ENCODE measurements at regions of chr6 and their contacts with region 1.

Region 1: DNA sequence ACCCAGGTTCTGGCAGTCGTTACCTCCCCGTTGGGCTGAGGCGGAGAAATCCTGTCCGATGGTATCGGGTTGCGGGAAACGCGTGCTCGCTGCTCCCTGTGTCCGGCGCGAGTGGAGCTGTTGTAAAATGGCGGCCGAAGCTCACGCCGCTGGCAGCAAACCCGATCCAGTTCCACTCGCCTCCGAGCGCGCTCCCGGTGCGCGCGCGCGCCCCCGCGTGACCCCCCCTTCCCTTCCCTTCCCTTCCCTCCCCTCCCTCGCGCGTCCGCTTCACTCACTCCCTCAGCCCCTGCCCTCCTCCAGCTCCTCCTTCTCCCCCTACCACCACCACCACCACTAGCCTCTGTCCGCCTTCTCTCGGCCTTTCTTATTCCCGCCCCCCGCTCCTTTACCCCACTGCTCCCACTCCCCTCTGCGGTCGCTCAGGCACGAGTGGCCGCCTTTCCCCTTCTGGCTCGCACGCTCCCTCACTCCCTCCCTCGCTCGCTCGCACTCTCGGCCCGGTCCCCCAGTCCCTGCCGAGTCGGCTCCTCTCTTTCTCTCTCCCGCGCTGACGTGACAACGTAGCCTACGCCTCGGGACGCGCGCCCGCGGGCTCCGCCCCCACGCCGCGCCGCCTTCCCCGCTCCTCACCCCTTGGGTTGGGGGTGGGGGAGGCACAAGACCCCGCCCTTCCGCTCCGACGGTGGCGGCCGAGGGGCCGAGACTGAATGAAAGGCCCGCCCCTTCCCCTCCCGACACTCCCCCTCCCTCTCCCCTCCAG is at the start of gene SYNCRIP:
- DNase-seq: peak; percentile 99
- H3K4me3 ChIP-seq: peak within 1 kb of the TSS; percentile 92 to 99 (median 99)
- H3K27ac ChIP-seq: peak within 1 kb of the TSS; percentile 99
- H3K4me1 ChIP-seq: peaks cover 23% of the 10 kb centered on the region
- H3K27me3 ChIP-seq: no peaks in the 10 kb centered on the region
- CTCF ChIP-seq: no peak
- total RNA-seq, gene SYNCRIP: 47.8 to 132 TPM

Region 2: DNA sequence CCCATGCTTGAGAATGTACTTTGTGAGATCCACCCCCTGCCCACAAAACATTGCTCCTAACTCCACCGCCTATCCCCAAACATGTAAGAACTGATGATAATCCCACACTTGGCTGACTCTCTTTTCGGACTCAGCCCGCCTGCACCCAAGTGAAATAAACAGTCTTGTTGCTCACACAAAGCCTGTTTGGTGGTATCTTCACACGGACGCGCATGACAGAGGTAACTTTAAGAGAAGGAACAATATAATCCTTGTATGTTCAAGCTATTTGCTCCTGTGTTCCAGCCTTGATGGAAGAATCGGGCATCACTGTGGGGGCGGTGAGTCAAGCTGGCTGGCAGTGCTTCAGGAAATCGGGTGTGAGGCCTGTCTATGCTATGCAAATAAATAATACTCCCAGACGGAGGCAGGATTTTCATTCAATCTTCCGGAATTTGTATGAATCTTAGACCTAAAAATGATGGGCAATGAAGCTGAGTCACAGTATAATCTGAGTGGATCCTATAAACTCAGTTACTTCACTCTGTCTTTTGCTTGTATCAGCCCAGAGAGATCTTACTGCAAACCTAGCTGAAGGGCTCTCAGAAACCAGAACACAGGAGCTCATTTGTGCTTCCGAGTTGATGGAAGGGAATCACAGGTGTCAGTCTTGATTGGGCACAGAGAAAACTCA is 238.3 kb before region 1 on chr6:
- CTCF ChIA-PET with region 1: no interaction called
- dilution Hi-C with region 1: loop called (anchors 10 kb)
- in situ Hi-C with region 1: no loop called
- intact Hi-C with region 1: no loop called
- DNase-seq: peak; percentile 94
- H3K4me3 ChIP-seq: peak overlapping the region in 1 of 3 experiments; percentile 32
- H3K27ac ChIP-seq: peak overlapping the region; percentile 96
- H3K4me1 ChIP-seq: peaks cover 59% of the 10 kb centered on the region
- H3K27me3 ChIP-seq: no peaks in the 10 kb centered on the region
- CTCF ChIP-seq: no peak

Region 3: DNA sequence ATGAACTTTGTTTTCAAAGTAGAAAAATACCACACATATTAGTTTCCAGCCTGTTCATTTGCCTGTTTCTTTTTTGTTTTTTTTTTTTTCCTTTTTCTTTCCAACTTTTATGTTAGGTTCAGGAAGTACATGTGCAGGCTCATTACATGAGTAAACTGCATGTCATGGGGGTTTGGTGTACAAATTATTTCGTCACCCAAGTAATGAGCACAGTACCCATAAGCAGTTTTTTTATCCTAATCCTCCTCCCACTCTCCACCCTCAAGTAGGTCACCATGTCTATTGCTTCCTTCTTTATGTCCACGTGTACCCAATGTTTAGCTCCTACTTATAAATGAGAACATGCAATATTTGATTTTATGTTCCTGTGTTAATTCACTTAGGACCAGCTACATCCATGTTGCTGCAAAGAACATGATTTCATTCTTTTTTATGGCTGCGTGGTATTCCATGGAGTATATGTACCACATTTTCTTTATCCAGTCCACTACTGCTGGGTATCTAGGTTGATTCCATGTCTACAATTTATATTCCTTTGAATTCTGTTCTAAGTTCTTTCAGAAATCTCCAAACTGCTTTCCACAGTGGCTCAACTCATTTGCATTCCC is 81.1 kb before region 1 on chr6:
- CTCF ChIA-PET with region 1: no interaction called
- dilution Hi-C with region 1: no loop called
- in situ Hi-C with region 1: no loop called
- intact Hi-C with region 1: no loop called
- DNase-seq: peak; percentile 54
- H3K4me3 ChIP-seq: no peak overlapping the region
- H3K27ac ChIP-seq: peak overlapping the region; percentile 12
- H3K4me1 ChIP-seq: peaks cover 4% of the 10 kb centered on the region
- H3K27me3 ChIP-seq: no peaks in the 10 kb centered on the region
- CTCF ChIP-seq: no peak

Region 4: GRCh38 chr6:85593438-85594196 is 49.3 kb before region 1 on chr6 and contains the start of gene SNX14:
- CTCF ChIA-PET with region 1: no interaction called
- dilution Hi-C with region 1: no loop called
- in situ Hi-C with region 1: no loop called
- intact Hi-C with region 1: loop called (anchors 2 kb)
- DNase-seq: peak; percentile 93
- H3K4me3 ChIP-seq: peak within 1 kb of the TSS; percentile 87 to 94 (median 88)
- H3K27ac ChIP-seq: peak within 1 kb of the TSS; percentile 79
- H3K4me1 ChIP-seq: peaks cover 4% of the 10 kb centered on the region
- H3K27me3 ChIP-seq: no peaks in the 10 kb centered on the region
- CTCF ChIP-seq: peak in 1 of 2 donors; percentile 1
- total RNA-seq, gene SNX14: 76.8 to 87.6 TPM

Region 5: GRCh38 chr6:85620308-85620707 is 22.6 kb before region 1 on chr6:
- CTCF ChIA-PET with region 1: interaction called, 29 read pairs
- dilution Hi-C with region 1: no loop called
- in situ Hi-C with region 1: no loop called
- intact Hi-C with region 1: no loop called
- DNase-seq: no peak
- H3K4me3 ChIP-seq: no peak overlapping the region
- H3K27ac ChIP-seq: no peak overlapping the region
- H3K4me1 ChIP-seq: no peaks in the 10 kb centered on the region
- H3K27me3 ChIP-seq: no peaks in the 10 kb centered on the region
- CTCF ChIP-seq: no peak

Region 6: DNA sequence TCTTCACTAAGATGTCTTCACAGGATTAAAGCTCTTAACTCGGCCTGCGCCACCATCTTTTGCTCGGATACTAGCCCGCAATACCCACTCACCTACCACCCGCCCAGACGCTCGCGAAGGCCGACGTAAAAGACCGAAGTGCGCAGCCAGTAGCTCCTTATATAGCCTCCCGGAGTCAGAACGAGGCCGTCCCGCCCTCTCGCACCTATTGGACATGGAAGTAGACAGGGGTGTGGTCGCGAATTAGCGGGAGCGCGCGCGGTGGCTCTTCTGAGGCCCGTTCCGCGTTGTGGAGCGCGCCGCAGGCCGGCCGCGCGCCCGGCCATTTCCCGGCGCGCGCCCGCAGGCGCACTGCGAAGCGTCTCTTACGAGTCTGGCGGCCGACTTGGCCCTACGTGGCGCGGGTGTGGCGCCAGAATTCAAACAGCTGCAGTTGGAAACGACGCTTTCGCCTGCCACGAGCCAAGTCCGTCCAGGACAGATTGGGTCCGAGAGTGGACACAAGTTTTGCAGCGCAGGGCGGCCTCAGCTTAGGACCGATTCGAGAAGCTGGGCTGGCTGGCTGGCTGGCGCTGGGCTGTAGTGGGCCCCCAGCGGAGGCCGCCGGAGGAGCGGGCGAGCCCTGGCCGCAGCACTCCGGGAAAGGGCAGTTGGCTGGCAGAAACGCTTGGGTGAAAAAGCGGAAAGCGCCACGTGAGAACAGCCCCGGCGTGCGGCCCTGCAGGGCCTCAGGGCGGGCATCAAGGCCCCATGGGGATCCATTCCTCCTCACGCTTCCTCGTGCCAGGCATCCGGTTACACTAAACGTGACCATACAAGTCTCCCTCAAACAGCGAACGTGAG is 35.9 kb after region 1 on chr6:
- CTCF ChIA-PET with region 1: no interaction called
- dilution Hi-C with region 1: loop called (anchors 5 kb)
- in situ Hi-C with region 1: loop called in 1 of 2 experiments (anchors 5 kb)
- intact Hi-C with region 1: loop called (anchors 1 kb)
- DNase-seq: peak; percentile 99
- H3K4me3 ChIP-seq: peak overlapping the region; percentile 73 to 92 (median 90)
- H3K27ac ChIP-seq: peak overlapping the region; percentile 80
- H3K4me1 ChIP-seq: peaks cover 22% of the 10 kb centered on the region
- H3K27me3 ChIP-seq: no peaks in the 10 kb centered on the region
- CTCF ChIP-seq: peak in 1 of 2 donors; percentile 2

Measured in mammary epithelial cell (primary cell).